ENCODE measurements at regions of chr19 and their contacts with region 1.

Region 1: DNA sequence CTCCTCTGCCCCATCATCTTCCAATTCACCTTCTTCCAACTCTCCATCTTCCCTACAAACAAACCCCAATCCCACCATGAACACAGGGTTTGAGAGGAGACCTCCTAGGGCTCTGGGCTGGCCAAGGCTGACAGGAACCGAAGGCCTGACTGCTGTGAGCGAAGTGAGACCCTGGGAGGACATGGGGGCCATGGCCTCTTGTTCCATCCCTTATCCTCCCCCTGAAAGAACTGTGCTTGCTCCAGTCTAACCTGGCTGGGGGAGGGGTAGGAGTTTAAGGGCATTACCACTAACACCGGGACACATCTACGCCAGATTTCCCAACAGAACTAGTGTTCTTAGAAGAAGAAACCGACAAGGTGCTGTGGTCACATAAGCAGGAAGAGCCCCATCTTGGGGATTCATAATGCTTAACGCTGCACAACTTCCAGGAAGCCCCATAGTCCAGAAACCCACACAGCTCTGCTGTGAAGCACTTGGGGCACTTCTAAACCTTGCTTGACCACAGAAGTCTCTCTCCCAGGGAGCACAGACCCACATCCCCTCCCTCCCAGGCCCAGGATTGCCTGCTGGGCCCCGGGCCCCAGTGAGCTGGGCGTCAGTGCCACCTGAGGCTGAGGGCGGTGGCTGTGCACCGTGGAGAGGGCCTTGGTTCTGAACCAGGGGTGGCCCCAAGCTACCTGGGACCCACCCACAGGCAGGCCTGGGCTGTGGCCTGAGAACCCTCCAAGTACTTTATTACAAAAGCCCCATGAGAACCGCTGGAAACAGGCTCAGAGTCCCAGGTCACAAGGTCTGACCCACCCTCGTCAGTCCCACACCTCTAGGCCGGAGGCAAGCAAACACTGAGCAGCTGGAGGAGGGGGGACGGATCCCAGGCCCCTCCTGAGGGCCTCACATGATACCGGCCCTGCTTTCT is 18.8 kb downstream of the ZC3H4 start:
- DNase-seq: no peak
- ATAC-seq: no peak; a peak in 1 of 6 replicates
- H3K4me3 ChIP-seq: no peak overlapping the region
- H3K27ac ChIP-seq: peak overlapping the region; percentile 43 to 68; a peak in 3 of 6 replicates
- H3K4me1 ChIP-seq: peaks cover 26% of the 10 kb centered on the region
- CTCF ChIP-seq: no peak
- EP300 ChIP-seq: no peak
- POLR2A ChIP-seq: no peak
- RAD21 ChIP-seq: no peak

Region 2: GRCh38 chr19:47028195-47028601 is 66.6 kb before region 1 on chr19:
- CTCF ChIA-PET with region 1: no interaction called
- POLR2A ChIA-PET with region 1: no interaction called
- DNase-seq: no peak
- ATAC-seq: no peak
- H3K4me3 ChIP-seq: no peak overlapping the region
- H3K27ac ChIP-seq: no peak overlapping the region
- H3K4me1 ChIP-seq: peaks cover 2% of the 10 kb centered on the region; the same call in 2 of the 3 replicates
- CTCF ChIP-seq: no peak
- EP300 ChIP-seq: no peak
- POLR2A ChIP-seq: no peak
- RAD21 ChIP-seq: no peak

Region 3: GRCh38 chr19:47047763-47048405 is 46.9 kb before region 1 on chr19:
- CTCF ChIA-PET with region 1: no interaction called
- POLR2A ChIA-PET with region 1: no interaction called
- DNase-seq: peak; percentile 94 to 100
- ATAC-seq: peak; percentile 86 to 88
- H3K4me3 ChIP-seq: peak overlapping the region; percentile 80
- H3K27ac ChIP-seq: peak overlapping the region; percentile 78 to 91
- H3K4me1 ChIP-seq: 0 out of 3 replicates have a peak, but pooled peaks cover 4% of the 10 kb centered on the region
- CTCF ChIP-seq: no peak
- EP300 ChIP-seq: no peak
- POLR2A ChIP-seq: peak; percentile 68
- RAD21 ChIP-seq: no peak

Region 4: DNA sequence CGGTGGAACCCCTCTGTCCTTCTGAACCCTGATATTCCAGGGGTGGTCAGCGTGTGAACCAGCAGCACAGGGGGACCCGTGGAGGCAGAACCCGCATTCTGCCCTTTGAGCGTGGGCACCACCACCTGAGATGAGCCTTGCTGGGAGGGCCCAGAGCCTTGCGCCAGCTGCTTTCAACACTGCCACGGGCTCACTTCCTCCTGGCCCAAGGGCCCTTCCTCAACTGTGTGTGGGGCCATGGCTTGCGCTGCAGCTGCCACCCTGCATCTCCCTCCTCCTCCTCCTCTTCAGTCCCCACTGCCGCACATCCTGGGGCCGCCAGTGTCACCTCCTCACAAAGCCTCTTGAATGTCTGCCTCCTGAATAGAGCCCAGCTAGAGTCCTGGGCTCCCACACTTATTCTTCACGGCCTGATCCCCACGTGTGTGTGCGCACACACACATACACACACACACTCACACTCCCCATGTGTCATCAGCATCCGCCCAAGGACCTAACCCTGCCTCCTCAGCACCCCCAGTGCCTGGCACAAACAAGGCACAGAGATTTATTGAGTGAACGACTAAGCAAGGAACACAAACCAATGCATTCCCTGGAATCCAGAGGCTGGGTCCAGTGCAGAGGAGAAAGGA is 19.5 kb before region 1 on chr19:
- CTCF ChIA-PET with region 1: interaction called, 33 read pairs
- POLR2A ChIA-PET with region 1: interaction called, 3 read pairs
- DNase-seq: no peak
- ATAC-seq: no peak
- H3K4me3 ChIP-seq: no peak overlapping the region
- H3K27ac ChIP-seq: no peak overlapping the region
- H3K4me1 ChIP-seq: peaks cover 8% of the 10 kb centered on the region
- CTCF ChIP-seq: no peak
- EP300 ChIP-seq: no peak
- POLR2A ChIP-seq: no peak
- RAD21 ChIP-seq: no peak

Region 5: GRCh38 chr19:47081111-47081510 is 13.7 kb before region 1 on chr19:
- CTCF ChIA-PET with region 1: interaction called, 33 read pairs
- POLR2A ChIA-PET with region 1: interaction called, 3 read pairs
- DNase-seq: no peak
- ATAC-seq: no peak
- H3K4me3 ChIP-seq: no peak overlapping the region
- H3K27ac ChIP-seq: no peak overlapping the region
- H3K4me1 ChIP-seq: peaks cover 8% of the 10 kb centered on the region
- CTCF ChIP-seq: no peak
- EP300 ChIP-seq: no peak
- POLR2A ChIP-seq: no peak
- RAD21 ChIP-seq: no peak

Region 6: DNA sequence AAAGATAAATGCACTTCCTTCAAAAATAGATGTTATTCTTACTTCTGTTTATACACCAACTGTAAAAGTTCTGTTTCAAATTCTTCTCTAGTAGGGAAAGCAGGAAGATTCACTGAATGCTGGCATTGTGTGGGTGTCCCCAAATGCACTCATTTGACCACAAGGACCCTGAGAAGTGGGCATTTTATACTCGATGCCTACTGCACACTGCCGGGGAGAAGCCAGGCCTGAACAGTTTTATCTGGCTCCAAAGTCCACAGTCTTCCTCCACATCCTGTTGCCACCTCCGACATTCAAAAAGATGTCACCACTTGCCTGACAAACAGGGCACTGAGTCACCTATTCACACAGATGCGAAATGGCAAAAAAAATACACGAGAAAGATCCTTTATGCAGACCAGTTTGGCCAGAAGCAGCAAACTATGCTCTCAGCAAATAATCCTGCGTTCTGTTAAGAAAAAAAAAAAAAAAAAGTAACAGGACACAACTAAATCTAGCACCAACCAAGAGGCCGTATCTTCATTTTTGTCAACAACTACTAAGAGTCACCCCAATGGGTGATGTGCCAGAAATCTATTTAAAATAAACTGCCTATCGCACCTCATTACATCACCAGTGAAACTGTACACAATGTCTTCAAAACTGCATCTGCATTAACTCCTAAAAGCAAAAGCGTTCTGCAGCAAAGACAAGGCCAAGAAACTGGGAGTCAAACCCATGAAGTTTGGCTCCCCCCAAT is 12.6 kb after region 1 on chr19:
- CTCF ChIA-PET with region 1: interaction called, 14 read pairs
- POLR2A ChIA-PET with region 1: interaction called, 3 read pairs
- DNase-seq: no peak
- ATAC-seq: no peak
- H3K4me3 ChIP-seq: no peak overlapping the region
- H3K27ac ChIP-seq: peak overlapping the region; percentile 6 to 45; a peak in 4 of 6 replicates
- H3K4me1 ChIP-seq: peaks cover 39% of the 10 kb centered on the region
- CTCF ChIP-seq: no peak
- EP300 ChIP-seq: no peak
- POLR2A ChIP-seq: no peak
- RAD21 ChIP-seq: no peak

Measured in A549 (cell line).